A673 (cell line): ENCODE measurements at regions of chr6 and their contacts with region 1.

Region 1: DNA sequence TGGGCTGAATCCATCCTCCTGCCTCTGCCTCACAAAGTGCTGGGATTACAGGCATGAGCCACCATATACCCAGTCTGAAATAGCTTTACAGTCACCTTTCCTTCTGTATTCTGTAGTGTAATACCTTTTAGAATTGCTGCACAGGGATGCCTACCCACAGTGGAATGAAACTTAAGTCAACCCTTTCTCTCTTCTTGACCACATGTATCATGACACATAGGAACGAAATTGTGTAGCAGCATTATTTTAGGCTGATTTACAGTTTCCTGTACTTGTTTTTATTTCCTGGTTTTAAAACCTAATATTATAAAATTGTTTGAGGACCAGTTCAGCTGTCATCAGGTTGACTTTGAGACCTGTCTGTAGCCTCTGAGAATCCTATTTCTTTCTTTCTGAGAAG is 297.8 kb downstream of the ZFAND3 start:
- DNase-seq: no peak
- H3K4me3 ChIP-seq: no peak overlapping the region
- H3K27ac ChIP-seq: no peak overlapping the region
- H3K4me1 ChIP-seq: no peaks in the 10 kb centered on the region
- H3K27me3 ChIP-seq: no peaks in the 10 kb centered on the region
- CTCF ChIP-seq: no peak

Region 2: GRCh38 chr6:38039502-38039901 is 77.8 kb before region 1 on chr6:
- CTCF ChIA-PET with region 1: no interaction called
- POLR2A ChIA-PET with region 1: no interaction called
- intact Hi-C with region 1: no loop called
- DNase-seq: no peak
- H3K4me3 ChIP-seq: no peak overlapping the region
- H3K27ac ChIP-seq: no peak overlapping the region
- H3K4me1 ChIP-seq: peaks cover 26% of the 10 kb centered on the region
- H3K27me3 ChIP-seq: no peaks in the 10 kb centered on the region
- CTCF ChIP-seq: no peak

Region 3: DNA sequence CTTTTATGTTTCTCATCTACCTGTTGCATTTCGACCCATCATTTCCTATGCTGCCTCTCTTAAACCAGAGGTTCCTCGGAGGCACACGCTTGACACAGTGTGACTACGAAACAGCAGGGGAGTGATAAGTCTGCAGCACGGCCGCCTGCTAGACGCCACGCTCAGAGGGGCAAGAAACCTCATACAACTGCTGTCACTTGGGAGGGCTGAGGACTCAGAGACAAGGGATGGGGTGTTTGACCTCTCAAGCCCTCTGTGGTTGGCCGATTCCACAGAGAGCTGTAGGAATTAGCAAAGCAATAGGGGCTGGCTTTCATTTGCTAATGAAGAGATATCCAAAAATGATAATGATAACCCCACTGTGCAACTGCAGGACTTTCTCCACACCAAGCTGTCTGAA is 74.7 kb after region 1 on chr6:
- CTCF ChIA-PET with region 1: interaction called, 11 read pairs
- POLR2A ChIA-PET with region 1: no interaction called
- intact Hi-C with region 1: no loop called
- DNase-seq: no peak
- H3K4me3 ChIP-seq: no peak overlapping the region
- H3K27ac ChIP-seq: no peak overlapping the region
- H3K4me1 ChIP-seq: peaks cover 8% of the 10 kb centered on the region
- H3K27me3 ChIP-seq: no peaks in the 10 kb centered on the region
- CTCF ChIP-seq: no peak

Region 4: DNA sequence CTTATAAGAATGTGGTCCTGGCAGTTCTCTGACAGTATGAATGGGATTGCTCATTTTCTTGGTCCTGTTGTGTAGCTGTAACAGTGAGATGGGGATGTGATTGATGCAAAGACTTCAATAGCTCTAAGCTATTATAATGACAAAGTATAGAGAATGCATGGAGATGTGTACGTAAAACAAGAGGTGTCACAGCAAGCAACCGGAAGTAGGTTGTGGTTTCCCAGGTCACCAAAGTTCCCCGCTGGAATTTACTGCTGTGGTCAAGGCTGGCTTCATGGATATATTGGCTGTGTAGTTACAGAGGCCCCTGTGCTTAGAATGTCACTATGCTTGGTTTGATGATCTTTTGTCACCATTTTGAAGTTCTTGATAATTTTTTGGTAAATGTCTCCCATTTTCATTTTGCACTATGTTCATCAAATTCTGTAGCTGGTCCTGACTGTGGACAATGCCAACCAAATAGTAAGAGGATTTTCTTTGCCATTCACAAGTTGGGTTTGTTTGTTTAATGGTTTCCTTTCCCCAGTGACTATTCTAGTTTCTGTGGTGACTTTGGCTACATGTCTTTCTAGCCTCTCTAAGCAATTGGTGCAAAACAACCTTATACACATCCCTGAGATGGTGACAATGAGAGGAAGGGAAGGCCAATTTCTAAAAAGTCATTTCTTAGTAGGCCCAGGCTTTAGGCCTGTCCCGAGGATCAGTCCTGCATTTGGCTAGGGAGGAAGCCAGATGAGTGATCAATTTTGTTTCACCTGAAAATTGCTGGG is 608.3 kb after region 1 on chr6:
- CTCF ChIA-PET with region 1: no interaction called
- POLR2A ChIA-PET with region 1: interaction called, 11 read pairs
- intact Hi-C with region 1: no loop called
- DNase-seq: no peak
- H3K4me3 ChIP-seq: no peak overlapping the region
- H3K27ac ChIP-seq: no peak overlapping the region
- H3K4me1 ChIP-seq: peaks cover 7% of the 10 kb centered on the region
- H3K27me3 ChIP-seq: no peaks in the 10 kb centered on the region
- CTCF ChIP-seq: no peak

Region 5: DNA sequence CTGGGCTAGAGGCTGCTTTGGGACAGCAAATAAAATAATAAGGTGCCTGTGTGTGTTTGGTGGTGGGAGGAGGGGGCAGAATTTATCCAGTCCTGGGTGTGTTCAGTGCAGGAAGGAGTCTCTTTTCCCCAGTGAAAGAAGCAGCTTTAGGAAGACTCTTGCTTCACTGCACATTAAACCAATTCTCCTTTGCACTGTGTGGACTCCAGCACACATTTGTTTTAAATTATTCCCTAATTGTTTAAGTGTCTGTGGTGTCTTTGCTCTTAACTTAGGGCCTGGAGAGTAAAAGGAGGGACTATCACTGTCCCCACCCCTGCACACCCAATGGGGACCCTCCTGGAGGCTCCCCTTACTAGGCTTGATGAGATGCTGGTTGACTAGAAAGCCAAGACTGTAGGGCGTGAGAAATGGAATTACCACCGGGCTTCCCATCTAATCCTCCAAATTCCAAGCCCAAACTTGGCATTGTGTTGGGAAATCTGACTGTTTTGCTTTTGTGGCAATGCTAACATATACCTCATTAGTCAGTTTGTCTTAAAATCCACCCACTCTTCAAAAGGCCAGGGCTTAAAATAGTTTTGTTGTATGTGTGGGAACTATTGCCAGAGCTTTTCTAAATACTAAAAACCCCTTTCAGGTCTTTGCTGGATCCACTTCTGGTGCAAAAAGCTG is 1661.4 kb after region 1 on chr6:
- CTCF ChIA-PET with region 1: no interaction called
- POLR2A ChIA-PET with region 1: no interaction called
- intact Hi-C with region 1: no loop called
- DNase-seq: no peak
- H3K4me3 ChIP-seq: no peak overlapping the region
- H3K27ac ChIP-seq: no peak overlapping the region
- H3K4me1 ChIP-seq: no peaks in the 10 kb centered on the region
- H3K27me3 ChIP-seq: no peaks in the 10 kb centered on the region
- CTCF ChIP-seq: no peak